ENCODE measurements at regions of chr2 and their contacts with region 1.

Region 1: GRCh38 chr2:230987137-230988020 is 8.5 kb upstream of the SPATA3 start:
- DNase-seq: peak; percentile 57 to 95 (median 86)

Region 2: GRCh38 chr2:230824406-230824978 is 162.9 kb before region 1 on chr2:
- intact Hi-C with region 1: loop called (anchors 5 kb)
- DNase-seq: peak in 39 of 42 donors; percentile 22 to 87 (median 59)

Region 3: GRCh38 chr2:230885463-230886130 is 101.8 kb before region 1 on chr2:
- intact Hi-C with region 1: no loop called
- DNase-seq: peak; percentile 63 to 98 (median 86)

Region 4: GRCh38 chr2:230902180-230902899 is 85.0 kb before region 1 on chr2:
- intact Hi-C with region 1: loop called (anchors 2 kb)
- DNase-seq: peak in 33 of 42 donors; percentile 41 to 81 (median 57)

Region 5: DNA sequence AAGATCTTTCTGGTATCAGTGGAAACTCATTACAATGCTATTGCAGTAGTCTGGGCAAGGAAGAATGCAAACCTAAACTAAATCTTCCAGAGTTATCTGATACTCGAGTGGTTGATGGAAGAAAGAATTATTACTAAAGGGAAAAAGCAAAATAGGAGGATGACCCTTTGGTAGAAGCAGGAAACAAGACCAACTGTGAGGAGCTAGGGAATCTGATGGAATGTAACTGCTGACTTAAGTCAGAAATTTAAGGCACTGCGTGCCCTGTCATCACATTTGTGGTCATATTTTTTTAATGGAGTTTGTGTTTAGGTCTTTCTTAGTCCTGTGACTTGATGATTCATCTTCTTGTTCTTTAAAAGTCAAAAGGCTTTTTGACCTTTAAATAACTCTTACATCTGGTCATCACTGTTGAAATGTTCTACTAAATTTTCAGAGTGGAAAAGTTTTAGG is 174.5 kb after region 1 on chr2:
- intact Hi-C with region 1: no loop called
- DNase-seq: no peak

Measured in head of caudate nucleus (tissue), 42 donors.